PC-3 (cell line): ENCODE measurements at regions of chr12 and their contacts with region 1.

Region 1: DNA sequence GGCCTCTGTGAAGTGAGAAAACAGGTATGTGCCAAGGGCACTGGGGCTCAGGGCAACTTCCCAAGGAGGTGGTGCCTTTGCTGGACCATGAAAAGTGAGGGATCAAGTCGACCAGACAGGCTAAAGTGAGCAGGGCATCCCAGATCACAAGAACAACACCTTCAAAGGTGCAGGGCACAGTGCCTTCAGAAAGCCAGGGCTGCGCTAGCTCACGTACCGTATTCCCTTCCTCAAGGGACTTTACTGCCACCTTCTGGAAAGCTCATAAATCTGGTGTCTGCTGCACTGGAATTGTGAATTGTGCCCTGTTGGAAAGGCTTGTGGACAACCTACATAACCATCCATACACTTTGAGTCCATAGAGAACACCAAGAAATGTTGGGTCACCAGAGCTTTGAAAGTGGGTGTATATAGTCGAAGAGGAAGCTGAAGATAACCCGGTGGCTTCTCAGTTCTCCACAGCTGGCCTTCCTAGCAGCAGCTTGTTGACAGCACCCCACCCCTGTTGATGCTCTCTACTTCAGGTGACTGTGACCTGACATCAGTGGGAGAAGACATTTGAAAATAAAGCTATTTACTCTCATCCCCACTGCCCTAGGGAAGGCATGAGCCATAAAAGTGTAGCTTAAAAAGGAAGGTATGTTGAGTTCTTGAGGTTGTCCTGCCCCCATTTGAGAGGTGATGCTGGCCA is 24.5 kb downstream of the FIGNL2 start:
- DNase-seq: peak; percentile 83
- ATAC-seq: peak; percentile 33
- H3K4me3 ChIP-seq: no peak overlapping the region
- H3K27ac ChIP-seq: no peak overlapping the region
- H3K4me1 ChIP-seq: peaks cover 30% of the 10 kb centered on the region
- H3K27me3 ChIP-seq: no peaks in the 10 kb centered on the region
- CTCF ChIP-seq: peak; percentile 80

Region 2: GRCh38 chr12:51048661-51049251 is 775.3 kb before region 1 on chr12:
- CTCF ChIA-PET with region 1: no interaction called
- POLR2A ChIA-PET with region 1: no interaction called
- intact Hi-C with region 1: no loop called
- DNase-seq: no peak
- ATAC-seq: no peak
- H3K4me3 ChIP-seq: peak overlapping the region; percentile 88
- H3K27ac ChIP-seq: peak overlapping the region; percentile 42
- H3K4me1 ChIP-seq: peaks cover 12% of the 10 kb centered on the region
- H3K27me3 ChIP-seq: no peaks in the 10 kb centered on the region
- CTCF ChIP-seq: no peak

Region 3: DNA sequence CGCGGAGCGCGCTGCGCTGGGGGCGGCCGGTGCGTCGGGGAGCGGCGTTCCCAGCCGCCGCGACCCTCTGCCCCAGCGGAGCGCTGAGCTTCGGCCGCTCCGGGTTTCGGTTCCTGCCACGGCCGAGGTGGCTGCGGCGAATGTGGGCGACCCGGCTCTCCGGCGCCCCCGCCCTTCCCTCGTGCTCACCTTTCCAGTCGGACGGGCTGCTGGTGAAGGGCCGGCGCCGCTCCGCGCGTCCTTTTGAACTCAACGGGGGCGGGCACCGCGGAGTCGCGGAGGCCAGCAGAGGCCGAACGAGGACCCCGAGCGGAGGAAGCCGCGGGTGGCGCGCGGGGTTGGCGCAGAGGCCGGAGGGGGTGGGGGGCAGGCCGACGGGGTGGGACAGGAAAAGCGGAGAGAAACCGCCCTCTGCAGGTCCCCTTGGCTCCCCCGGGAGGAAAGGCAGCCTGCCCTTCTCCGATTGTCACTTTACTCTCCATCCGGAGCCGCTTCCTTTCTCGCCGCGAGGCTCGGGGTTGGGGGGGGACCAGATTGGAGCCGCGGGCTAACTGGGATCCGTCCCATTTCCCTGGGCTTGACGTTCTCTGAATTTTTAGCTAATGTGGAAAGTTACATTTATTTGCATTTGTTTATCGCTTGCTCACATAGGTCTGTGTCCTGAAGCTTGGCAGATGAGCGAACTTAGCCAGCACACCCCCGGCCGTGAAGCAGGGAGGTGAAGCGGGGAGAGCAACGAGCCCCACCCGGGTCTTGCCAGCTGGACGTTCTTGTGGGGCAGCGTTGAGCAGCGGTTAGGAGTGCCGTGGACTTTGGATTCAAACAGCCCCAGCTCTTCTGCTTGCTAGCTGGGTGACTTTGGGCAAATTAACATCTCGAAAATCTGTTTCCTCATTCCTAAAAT is 553.7 kb before region 1 on chr12 and contains the start of gene SMAGP:
- CTCF ChIA-PET with region 1: no interaction called
- POLR2A ChIA-PET with region 1: interaction called, 3 read pairs
- intact Hi-C with region 1: loop called (anchors 10 kb)
- DNase-seq: peak; percentile 86
- ATAC-seq: peak; percentile 48
- H3K4me3 ChIP-seq: peak within 1 kb of the TSS; percentile 68
- H3K27ac ChIP-seq: peak within 1 kb of the TSS; percentile 97
- H3K4me1 ChIP-seq: peaks cover 46% of the 10 kb centered on the region
- H3K27me3 ChIP-seq: no peaks in the 10 kb centered on the region
- CTCF ChIP-seq: no peak
- total RNA-seq, gene SMAGP: 55.3 and 62.5 TPM in 2 replicates

Region 4: DNA sequence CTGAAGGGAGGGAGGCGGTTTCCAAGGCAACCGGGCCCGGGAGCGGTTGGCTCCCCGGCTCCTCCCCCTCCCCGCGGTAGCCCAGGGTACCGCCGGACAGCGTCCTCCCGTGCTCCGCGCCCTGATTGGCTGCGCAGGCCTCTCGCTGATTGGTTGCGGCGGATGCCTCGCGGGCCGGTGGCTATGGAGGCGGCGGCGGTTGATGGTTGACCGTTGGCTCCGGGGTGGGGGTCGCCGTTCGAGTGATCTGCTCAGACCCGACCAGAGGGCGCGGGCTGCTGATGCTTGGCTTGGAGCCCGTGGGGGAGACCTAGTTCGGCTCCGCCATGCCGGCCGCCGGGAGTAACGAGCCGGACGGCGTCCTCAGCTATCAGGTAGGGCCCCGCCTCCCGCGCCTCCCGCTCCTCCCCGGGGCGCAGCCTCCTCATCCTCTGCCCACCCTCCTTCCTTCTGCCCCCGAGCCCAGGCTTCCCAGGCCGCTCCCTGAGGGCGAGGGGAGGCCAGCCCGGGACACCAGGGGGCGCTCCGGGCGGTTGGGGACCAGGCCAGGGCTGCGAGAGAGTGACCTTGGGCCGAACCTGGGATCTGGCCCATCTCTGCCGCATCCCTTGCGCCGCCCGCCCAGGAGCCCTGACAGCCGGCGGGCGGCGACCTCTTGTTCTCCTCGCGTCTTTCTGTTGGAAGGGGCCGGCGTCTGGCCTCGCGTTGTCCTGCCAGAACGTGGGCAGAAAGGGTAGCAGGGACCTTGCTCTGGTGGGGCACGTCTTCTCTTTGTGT is 399.2 kb before region 1 on chr12 and contains the start of gene SLC4A8:
- CTCF ChIA-PET with region 1: interaction called, 5 read pairs
- POLR2A ChIA-PET with region 1: no interaction called
- intact Hi-C with region 1: loop called (anchors 1 kb)
- DNase-seq: peak; percentile 84
- ATAC-seq: peak; percentile 94
- H3K4me3 ChIP-seq: peak within 1 kb of the TSS; percentile 75
- H3K27ac ChIP-seq: no peak within 1 kb of the TSS
- H3K4me1 ChIP-seq: peaks cover 13% of the 10 kb centered on the region
- H3K27me3 ChIP-seq: no peaks in the 10 kb centered on the region
- CTCF ChIP-seq: peak; percentile 84
- total RNA-seq, gene SLC4A8: 3.3 and 4.2 TPM in 2 replicates

Region 5: DNA sequence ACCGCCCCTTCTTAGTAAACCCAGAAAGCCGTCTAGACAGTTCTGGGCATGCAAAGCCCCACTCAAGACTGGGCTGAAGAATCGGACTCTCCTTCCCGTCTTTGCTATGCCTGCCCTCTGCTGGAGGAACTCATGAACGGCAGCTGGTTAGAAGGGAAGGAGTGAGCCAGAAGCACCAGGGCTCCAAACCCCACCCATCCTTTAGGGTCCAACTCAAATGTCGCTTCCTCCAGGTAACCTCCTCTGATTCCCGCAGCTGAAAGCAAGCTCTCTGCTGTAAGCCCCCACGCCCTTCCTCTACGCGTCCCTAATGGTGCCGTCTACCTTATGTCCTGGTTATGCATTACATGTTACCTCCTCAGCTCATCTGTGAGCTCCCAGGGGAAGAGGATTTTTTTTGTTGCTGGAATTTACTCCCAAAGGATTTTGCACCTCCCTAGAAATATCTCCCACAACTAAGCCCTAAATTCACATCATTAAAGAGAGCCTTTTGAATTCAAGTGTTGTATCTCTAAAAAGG is 292.0 kb before region 1 on chr12:
- CTCF ChIA-PET with region 1: interaction called, 7 read pairs
- POLR2A ChIA-PET with region 1: no interaction called
- intact Hi-C with region 1: loop called (anchors 2 kb)
- DNase-seq: peak; percentile 91
- ATAC-seq: peak; percentile 77
- H3K4me3 ChIP-seq: peak overlapping the region; percentile 45; the same call in 1 of the 2 replicates
- H3K27ac ChIP-seq: peak overlapping the region; percentile 17; the same call in 1 of the 2 replicates
- H3K4me1 ChIP-seq: peaks cover 35% of the 10 kb centered on the region
- H3K27me3 ChIP-seq: no peaks in the 10 kb centered on the region
- CTCF ChIP-seq: peak; percentile 91

Region 6: GRCh38 chr12:51590347-51591019 is 233.5 kb before region 1 on chr12:
- CTCF ChIA-PET with region 1: no interaction called
- POLR2A ChIA-PET with region 1: no interaction called
- intact Hi-C with region 1: loop called (anchors 5 kb)
- DNase-seq: peak; percentile 86
- ATAC-seq: peak; percentile 75
- H3K4me3 ChIP-seq: peak overlapping the region; percentile 83
- H3K27ac ChIP-seq: no peak overlapping the region
- H3K4me1 ChIP-seq: peaks cover 24% of the 10 kb centered on the region
- H3K27me3 ChIP-seq: no peaks in the 10 kb centered on the region
- CTCF ChIP-seq: peak; percentile 33; the same call in 1 of the 2 replicates

Region 7: GRCh38 chr12:51683726-51684357 is 140.2 kb before region 1 on chr12:
- CTCF ChIA-PET with region 1: no interaction called
- POLR2A ChIA-PET with region 1: interaction called, 10 read pairs
- intact Hi-C with region 1: loop called (anchors 5 kb)
- DNase-seq: peak; percentile 93
- ATAC-seq: peak; percentile 88
- H3K4me3 ChIP-seq: peak overlapping the region; percentile 24; the same call in 1 of the 2 replicates
- H3K27ac ChIP-seq: peak overlapping the region; percentile 52
- H3K4me1 ChIP-seq: peaks cover 42% of the 10 kb centered on the region
- H3K27me3 ChIP-seq: no peaks in the 10 kb centered on the region
- CTCF ChIP-seq: no peak

Region 8: GRCh38 chr12:51773145-51773867 is 50.7 kb before region 1 on chr12:
- CTCF ChIA-PET with region 1: no interaction called
- POLR2A ChIA-PET with region 1: no interaction called
- intact Hi-C with region 1: no loop called
- DNase-seq: peak; percentile 90
- ATAC-seq: peak; percentile 84
- H3K4me3 ChIP-seq: no peak overlapping the region
- H3K27ac ChIP-seq: no peak overlapping the region
- H3K4me1 ChIP-seq: peaks cover 9% of the 10 kb centered on the region
- H3K27me3 ChIP-seq: no peaks in the 10 kb centered on the region
- CTCF ChIP-seq: no peak

Region 9: DNA sequence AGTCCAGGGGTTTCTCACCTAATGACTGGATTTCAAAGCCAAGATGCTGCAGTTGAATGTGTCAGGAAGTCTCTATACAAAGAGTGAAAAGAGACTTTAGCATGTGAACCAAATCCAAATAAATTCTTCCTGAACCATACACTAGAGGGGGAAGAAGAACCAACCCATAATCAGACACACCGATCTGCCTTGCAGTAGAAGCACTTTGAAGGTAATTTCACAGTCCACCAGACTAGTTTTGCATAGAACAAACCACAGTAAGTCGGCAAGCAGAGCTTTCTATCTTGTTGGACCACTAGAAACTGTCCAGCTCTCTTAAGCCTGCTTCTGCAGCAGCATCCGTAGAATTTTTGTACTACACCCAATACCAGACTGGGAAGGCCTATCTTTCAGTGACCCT is 14.8 kb before region 1 on chr12:
- CTCF ChIA-PET with region 1: no interaction called
- POLR2A ChIA-PET with region 1: no interaction called
- intact Hi-C with region 1: no loop called
- DNase-seq: no peak
- ATAC-seq: no peak
- H3K4me3 ChIP-seq: no peak overlapping the region
- H3K27ac ChIP-seq: no peak overlapping the region
- H3K4me1 ChIP-seq: no peaks in the 10 kb centered on the region
- H3K27me3 ChIP-seq: no peaks in the 10 kb centered on the region
- CTCF ChIP-seq: no peak

Region 10: GRCh38 chr12:51871126-51871525 is 47.1 kb after region 1 on chr12:
- CTCF ChIA-PET with region 1: interaction called, 14 read pairs
- POLR2A ChIA-PET with region 1: no interaction called
- intact Hi-C with region 1: no loop called
- DNase-seq: no peak
- ATAC-seq: no peak
- H3K4me3 ChIP-seq: no peak overlapping the region
- H3K27ac ChIP-seq: no peak overlapping the region
- H3K4me1 ChIP-seq: no peaks in the 10 kb centered on the region
- H3K27me3 ChIP-seq: no peaks in the 10 kb centered on the region
- CTCF ChIP-seq: no peak